PC-9 (cell line): ENCODE measurements at regions of chr7 and their contacts with region 1.

Region 1: DNA sequence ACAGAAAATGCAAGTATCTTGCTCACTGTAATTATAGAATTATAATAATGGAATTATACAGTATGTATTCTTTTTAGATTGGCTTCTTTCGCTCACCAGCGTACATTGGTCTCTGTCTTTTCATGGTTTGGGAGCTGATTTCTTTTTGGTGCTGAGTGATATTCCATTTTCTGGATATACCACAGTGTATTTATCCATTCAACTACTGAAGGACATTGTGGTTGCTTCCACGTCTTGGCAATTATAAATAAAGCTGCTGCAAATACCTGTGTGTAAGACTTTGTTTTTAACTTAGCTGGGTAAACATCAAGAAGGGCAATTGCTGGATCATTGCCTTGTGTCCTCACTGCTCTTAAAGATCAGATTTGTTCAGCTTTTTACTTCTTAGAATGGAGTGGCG is 55.3 kb downstream of the SEPTIN7 start:
- DNase-seq: no peak
- H3K4me3 ChIP-seq: no peak overlapping the region
- H3K27ac ChIP-seq: no peak overlapping the region
- H3K4me1 ChIP-seq: no peaks in the 10 kb centered on the region
- H3K27me3 ChIP-seq: no peaks in the 10 kb centered on the region
- CTCF ChIP-seq: no peak

Region 2: GRCh38 chr7:35875292-35875691 is 19.1 kb after region 1 on chr7:
- CTCF ChIA-PET with region 1: no interaction called
- POLR2A ChIA-PET with region 1: no interaction called
- intact Hi-C with region 1: loop called (anchors 2 kb)
- DNase-seq: no peak
- H3K4me3 ChIP-seq: no peak overlapping the region
- H3K27ac ChIP-seq: no peak overlapping the region
- H3K4me1 ChIP-seq: no peaks in the 10 kb centered on the region
- H3K27me3 ChIP-seq: no peaks in the 10 kb centered on the region
- CTCF ChIP-seq: no peak